ENCODE measurements at regions of chr15 and their contacts with region 1.

Region 1: GRCh38 chr15:52039925-52040781 is 21.1 kb downstream of the MAPK6 start:
- DNase-seq: no peak
- H3K4me3 Mint-ChIP-seq: no peak overlapping the region
- H3K27ac Mint-ChIP-seq: no peak overlapping the region
- H3K4me1 Mint-ChIP-seq: peaks cover 32% of the 10 kb centered on the region
- H3K27me3 Mint-ChIP-seq: no peaks in the 10 kb centered on the region

Region 2: DNA sequence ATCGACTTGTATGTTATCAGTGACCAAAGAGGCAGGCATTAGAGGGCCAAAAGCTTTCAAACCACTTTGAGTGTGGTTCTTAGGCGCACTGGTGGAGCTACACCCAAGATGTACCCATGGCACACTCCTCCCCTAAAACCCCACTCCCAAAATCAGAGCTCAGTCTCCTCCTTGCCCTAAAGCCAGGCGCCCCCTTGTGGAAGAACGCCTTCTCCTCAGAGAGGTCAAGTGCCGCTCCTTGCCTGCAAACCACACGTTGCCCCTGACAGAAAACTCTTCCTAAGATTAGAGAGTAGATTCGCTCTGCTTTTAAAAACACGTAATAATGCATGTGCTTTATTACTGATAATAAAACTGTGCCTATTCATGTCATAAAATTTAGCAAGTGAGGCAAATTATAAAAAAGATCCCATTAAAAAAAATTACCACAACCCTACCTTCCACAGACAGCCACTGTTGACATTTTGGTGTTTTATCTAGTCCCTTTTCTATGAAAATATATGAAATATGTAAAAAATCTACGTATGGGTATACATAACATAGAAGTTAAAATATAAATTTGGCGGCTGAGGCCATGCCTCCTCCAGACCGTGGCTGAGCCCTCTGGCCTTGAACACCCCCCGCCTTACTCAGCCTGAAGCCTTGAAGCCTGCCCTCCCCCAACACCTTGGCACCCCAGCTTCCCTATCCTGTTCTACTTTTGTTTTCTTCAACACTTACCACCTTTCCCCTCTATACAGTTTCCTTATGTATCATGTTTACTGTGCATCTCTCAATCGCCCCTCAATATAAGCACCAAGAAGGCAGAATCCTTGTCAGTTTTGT is 38.9 kb after region 1 on chr15:
- intact Hi-C with region 1: loop called (anchors 5 kb)
- DNase-seq: peak; percentile 94
- H3K4me3 Mint-ChIP-seq: no peak overlapping the region
- H3K27ac Mint-ChIP-seq: no peak overlapping the region
- H3K4me1 Mint-ChIP-seq: peaks cover 24% of the 10 kb centered on the region
- H3K27me3 Mint-ChIP-seq: no peaks in the 10 kb centered on the region

Region 3: DNA sequence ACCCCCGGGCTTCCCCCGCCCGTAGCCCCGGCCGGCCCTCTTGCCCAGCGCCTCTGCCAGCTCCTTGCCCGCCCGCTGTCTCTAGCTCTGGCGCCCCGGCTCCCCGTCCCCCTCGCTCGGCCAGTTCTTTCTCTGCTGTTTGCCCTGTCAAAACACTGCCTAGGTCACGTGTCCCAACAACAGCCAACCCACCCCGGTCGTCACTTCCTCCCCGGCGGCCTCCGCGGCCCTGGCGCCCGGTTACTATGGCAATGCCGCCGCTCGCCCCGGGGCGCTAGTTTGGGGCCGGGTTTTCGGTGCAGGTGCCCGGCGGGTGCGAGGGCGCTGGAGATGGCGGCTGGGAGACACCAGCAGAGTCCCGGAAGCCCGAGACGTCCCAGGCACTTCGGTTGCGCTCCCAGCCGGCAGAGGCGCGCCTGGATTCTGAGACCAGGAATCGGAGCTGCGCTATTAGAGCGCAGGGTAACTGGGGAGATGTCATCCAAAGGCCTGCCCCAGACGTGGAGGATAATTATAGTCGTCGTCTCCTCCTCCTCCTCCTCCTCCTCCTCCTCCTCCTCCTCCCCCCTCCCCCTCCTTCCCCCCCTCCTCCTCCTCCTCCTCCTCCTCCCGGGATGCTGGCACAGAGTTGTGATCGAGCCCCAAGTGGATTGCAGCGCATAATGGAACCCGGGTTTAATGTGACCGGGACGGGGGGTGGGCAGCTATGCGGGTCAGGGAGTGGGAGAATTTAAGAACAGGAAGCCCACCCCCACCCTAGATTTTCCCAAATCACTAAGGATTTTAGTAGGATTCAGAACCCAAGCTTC is 639.3 kb after region 1 on chr15 and contains the start of gene ATOSA:
- intact Hi-C with region 1: no loop called
- DNase-seq: peak; percentile 98
- H3K4me3 Mint-ChIP-seq: peak within 1 kb of the TSS; percentile 98
- H3K27ac Mint-ChIP-seq: peak within 1 kb of the TSS; percentile 99
- H3K4me1 Mint-ChIP-seq: peaks cover 31% of the 10 kb centered on the region
- H3K27me3 Mint-ChIP-seq: peaks cover 6% of the 10 kb centered on the region
- total RNA-seq, gene ATOSA: 9.3 and 13.4 TPM in 2 replicates

Measured in activated CD4-positive, alpha-beta T cell treated with anti-CD3 and anti-CD28 coated beads, Interleukin-2, amount 10 ng/mL, durations not matched to agents 24 days and 14 days (primary cell).